Ascending aorta (tissue), 2 donors: ENCODE measurements at regions of chr5 and their contacts with region 1.

Region 1: DNA sequence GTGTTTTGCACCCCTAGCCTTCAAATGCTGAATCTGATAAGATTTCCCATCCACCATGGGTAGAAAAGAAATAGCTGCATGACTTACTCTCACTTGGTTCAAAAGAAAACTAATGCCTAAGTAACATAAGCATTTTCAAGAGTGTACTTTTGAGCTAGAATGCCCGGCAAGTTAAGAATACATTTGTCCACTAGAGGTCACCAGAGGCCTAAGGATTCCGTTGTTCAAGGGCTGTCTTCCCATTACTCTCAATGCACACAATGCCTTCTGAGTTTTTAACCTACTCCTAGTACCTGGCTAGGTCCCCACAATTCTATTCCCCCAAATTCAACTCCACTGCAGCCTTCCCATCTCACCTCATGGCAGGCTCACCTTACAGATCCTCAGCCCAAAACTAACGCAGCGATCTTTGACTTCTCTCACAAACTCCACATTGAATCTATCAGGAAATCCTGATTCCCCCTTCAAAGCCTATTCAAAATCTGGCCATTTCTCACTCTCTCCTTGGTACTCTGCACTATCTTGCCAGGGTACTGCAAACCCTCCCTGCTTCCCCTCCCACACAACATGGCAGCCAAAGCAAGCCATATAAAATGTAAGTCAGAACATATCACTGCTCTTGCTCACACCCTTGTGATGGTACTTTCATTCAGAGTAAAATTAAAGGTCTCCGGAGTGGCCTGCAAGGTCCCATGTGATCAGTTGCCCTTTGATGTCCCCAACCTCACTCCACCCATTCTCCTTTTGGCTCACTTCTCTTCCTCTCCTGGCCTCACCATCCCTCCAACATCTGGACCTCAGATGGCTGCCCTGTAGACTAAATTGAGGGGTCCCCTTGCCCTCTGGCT is 13.4 kb downstream of the OXCT1 start:
- DNase-seq: peak in 1 of 2 donors; percentile 73
- H3K4me3 ChIP-seq: no peak overlapping the region
- H3K27ac ChIP-seq: peak overlapping the region in 1 of 2 donors; percentile 32
- H3K4me1 ChIP-seq: no peaks in the 10 kb centered on the region
- H3K27me3 ChIP-seq: no peaks in the 10 kb centered on the region
- CTCF ChIP-seq: peak; percentile 45 to 76 (median 72)

Region 2: GRCh38 chr5:41636605-41637004 is 220.3 kb before region 1 on chr5:
- intact Hi-C with region 1: no loop called
- DNase-seq: no peak
- H3K4me3 ChIP-seq: no peak overlapping the region
- H3K27ac ChIP-seq: no peak overlapping the region
- H3K4me1 ChIP-seq: no peaks in the 10 kb centered on the region
- H3K27me3 ChIP-seq: no peaks in the 10 kb centered on the region
- CTCF ChIP-seq: no peak

Region 3: GRCh38 chr5:41721516-41721915 is 135.4 kb before region 1 on chr5:
- intact Hi-C with region 1: no loop called
- DNase-seq: no peak
- H3K4me3 ChIP-seq: no peak overlapping the region
- H3K27ac ChIP-seq: no peak overlapping the region
- H3K4me1 ChIP-seq: no peaks in the 10 kb centered on the region
- H3K27me3 ChIP-seq: no peaks in the 10 kb centered on the region
- CTCF ChIP-seq: no peak

Region 4: DNA sequence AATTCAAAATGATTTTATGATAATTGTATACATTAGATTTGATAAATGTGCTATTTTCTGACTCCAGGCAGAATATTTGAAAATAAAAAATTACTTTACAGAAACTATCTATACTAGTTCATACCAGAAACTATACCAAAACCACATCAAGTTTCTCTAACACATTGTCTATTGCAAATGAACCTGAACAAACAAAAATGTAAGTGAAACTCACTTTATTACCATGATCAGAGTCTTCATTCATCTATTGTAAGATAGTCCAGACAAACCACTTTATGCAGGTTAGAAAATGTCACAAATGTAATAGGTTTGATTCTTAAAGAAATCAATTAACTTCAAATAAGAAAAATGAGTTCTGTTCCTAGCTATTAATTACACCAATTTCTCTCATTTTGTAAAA is 86.1 kb before region 1 on chr5:
- intact Hi-C with region 1: no loop called
- DNase-seq: no peak
- H3K4me3 ChIP-seq: no peak overlapping the region
- H3K27ac ChIP-seq: no peak overlapping the region
- H3K4me1 ChIP-seq: peaks cover 0 to 2% of the 10 kb centered on the region in 2 donors
- H3K27me3 ChIP-seq: no peaks in the 10 kb centered on the region
- CTCF ChIP-seq: no peak

Region 5: DNA sequence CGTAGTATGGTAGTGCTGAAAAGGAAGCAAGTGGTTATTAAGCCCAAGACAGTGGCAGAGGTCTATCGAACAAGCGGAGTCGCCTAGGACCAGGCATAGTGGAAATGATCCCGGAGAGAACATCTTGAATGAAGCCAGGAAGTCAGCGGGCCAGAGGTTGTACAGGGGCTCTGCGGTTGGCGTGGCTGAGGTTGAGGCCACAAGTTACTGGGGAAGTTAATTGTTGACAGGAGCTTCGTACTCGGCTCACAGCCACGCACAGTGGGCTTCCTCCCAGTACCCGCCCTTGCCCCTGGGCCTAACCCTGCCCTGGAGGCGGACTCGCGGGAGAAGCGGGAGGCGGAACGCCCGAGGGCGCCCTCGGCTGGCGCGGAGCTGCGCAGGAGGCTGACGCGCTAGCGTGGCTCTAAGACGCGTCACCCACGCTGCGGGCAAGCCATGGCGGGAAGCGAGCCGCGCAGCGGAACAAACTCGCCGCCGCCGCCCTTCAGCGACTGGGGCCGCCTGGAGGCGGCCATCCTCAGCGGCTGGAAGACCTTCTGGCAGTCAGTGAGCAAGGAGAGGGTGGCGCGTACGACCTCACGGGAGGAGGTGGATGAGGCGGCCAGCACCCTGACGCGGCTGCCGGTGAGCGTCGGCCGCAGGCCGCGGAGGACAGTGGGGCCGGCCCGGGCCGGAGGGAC is 68.1 kb after region 1 on chr5 and contains the start of gene FBXO4:
- intact Hi-C with region 1: loop called (anchors 1 kb)
- DNase-seq: peak; percentile 48 to 93
- H3K4me3 ChIP-seq: peak within 1 kb of the TSS; percentile 77 to 83
- H3K27ac ChIP-seq: peak within 1 kb of the TSS; percentile 96 to 100
- H3K4me1 ChIP-seq: peaks cover 0 to 10% of the 10 kb centered on the region in 2 donors
- H3K27me3 ChIP-seq: no peaks in the 10 kb centered on the region
- CTCF ChIP-seq: peak; percentile 49 to 79 (median 79)
- total RNA-seq, gene FBXO4: 0.64 TPM

Region 6: DNA sequence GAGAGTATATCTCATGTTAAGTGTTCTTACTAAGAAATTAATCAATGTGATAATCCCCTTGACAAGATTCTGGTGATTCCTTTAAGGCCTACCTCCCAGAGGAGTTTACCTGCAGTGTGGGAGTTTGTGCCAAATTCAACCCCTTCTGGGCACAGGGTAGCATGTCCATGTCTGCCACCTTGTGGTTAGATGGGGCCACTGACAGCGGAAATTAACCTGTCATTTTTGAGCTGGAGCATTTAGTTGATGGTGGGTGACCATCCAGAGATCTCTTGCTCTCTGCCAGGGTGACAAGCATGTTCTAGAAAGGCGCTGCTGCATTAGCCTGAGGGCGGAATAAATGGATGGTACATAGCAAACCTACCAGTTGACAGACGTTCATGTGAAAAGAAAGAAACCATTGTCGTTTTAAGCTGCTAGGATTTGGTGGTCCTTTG is 200.4 kb after region 1 on chr5:
- intact Hi-C with region 1: loop called (anchors 1 kb)
- DNase-seq: peak in 1 of 2 donors; percentile 64
- H3K4me3 ChIP-seq: no peak overlapping the region
- H3K27ac ChIP-seq: no peak overlapping the region
- H3K4me1 ChIP-seq: no peaks in the 10 kb centered on the region
- H3K27me3 ChIP-seq: no peaks in the 10 kb centered on the region
- CTCF ChIP-seq: peak in 2 of 3 experiments; percentile 47 to 63